Vagina (tissue), 2 donors: ENCODE measurements at regions of chr12 and their contacts with region 1.

Region 1: DNA sequence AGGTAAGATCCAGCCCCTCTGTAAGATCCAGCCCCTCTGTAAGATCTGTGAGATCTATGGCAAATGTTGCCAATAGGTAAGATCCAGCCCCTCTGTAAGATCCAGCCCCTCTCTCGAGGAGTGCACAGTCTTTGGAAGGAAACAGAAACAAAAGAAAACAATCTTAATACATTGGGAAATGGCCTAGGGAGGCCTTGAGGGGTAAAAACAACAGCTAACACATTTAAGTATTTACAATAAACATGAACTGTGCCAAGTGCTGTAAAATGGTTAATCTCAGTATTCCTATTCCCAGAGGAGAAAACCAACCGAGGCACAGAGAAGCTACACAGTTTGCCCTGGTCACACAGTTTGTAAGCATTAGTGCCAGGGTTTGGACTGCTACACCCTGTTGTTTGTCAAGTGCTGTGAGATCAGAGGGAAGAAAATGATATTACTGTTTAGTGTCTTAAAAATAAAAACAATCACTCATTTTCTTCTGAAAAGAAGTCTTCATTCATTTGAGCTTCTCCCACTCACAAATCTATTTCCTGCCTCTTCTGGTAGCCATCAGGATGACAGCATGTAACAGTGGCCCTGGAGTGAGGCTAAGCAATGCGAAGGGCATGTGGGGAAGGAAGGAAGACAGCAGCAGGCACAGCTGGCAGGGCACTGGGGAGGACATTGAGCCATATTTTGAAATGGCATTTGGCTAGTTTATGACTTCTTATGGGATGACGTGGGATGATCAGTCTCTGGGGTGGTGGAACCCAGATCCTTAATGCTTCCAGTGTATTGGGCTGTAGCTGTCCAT is 118.7 kb upstream of the PTPRQ start:
- DNase-seq: no peak
- H3K4me3 ChIP-seq: no peak overlapping the region
- H3K27ac ChIP-seq: no peak overlapping the region
- H3K4me1 ChIP-seq: peaks cover 9% of the 10 kb centered on the region
- H3K27me3 ChIP-seq: no peaks in the 10 kb centered on the region
- CTCF ChIP-seq: no peak
- POLR2A ChIP-seq: no peak

Region 2: DNA sequence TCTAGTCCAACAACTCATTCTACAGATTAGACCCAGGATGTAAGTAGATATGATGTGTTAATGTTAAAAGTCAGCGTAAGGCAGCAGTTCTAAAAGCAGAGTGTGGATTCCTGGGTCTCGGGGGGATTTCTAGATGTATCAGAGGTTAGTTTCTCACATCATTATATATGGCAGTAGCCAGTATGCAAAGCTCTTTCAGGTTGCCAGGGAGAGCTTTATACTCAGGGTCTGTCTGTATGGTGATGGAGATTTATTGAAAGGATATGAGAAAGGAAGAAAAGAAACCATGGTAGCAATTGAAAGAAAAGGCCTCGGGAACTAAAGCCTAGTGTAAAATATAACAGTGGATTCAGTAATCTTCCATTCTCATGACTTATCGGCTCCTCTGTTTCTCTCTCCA is 608.4 kb before region 1 on chr12:
- intact Hi-C with region 1: loop called (anchors 5 kb)
- DNase-seq: no peak
- H3K4me3 ChIP-seq: no peak overlapping the region
- H3K27ac ChIP-seq: no peak overlapping the region
- H3K4me1 ChIP-seq: no peaks in the 10 kb centered on the region
- H3K27me3 ChIP-seq: no peaks in the 10 kb centered on the region
- CTCF ChIP-seq: no peak
- POLR2A ChIP-seq: no peak